GM12878 (cell line): ENCODE measurements at regions of chr7 and their contacts with region 1.

Region 1: DNA sequence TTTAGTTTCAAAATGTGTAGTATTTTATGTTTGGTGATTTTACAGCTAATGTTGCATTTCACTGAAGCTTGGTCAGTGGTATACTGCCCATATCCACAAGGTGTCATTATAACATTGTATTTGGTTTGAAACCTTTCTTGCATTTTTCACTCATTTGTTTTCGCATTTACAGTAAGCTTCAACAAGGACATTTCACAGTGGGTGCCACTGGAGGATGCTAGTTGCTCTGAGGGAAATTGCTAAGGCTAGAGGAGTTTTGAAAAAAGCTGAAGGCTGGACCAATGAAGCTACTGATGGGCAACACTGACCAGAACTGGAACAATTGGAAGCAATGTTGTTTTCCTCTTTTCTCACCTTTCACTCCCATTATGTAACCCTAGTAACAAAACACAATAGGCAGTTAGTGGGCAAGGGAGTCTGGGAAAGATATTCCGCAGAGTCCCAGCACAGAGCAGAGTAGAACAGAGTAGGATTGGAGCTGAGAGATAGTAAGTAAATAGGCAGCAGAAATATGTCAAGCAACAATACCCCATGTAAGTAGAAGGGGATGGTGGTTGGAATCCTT is 23.6 kb upstream of the SRI start:
- DNase-seq: peak; percentile 7
- ATAC-seq: peak; percentile 86
- H3K4me3 ChIP-seq: no peak overlapping the region
- H3K27ac ChIP-seq: no peak overlapping the region
- H3K4me1 ChIP-seq: no peaks in the 10 kb centered on the region
- H3K27me3 ChIP-seq: no peaks in the 10 kb centered on the region
- CTCF ChIP-seq: peak; percentile 57 to 83 (median 65)
- EP300 ChIP-seq: no peak
- POLR2A ChIP-seq: no peak
- RAD21 ChIP-seq: peak; percentile 86

Region 2: DNA sequence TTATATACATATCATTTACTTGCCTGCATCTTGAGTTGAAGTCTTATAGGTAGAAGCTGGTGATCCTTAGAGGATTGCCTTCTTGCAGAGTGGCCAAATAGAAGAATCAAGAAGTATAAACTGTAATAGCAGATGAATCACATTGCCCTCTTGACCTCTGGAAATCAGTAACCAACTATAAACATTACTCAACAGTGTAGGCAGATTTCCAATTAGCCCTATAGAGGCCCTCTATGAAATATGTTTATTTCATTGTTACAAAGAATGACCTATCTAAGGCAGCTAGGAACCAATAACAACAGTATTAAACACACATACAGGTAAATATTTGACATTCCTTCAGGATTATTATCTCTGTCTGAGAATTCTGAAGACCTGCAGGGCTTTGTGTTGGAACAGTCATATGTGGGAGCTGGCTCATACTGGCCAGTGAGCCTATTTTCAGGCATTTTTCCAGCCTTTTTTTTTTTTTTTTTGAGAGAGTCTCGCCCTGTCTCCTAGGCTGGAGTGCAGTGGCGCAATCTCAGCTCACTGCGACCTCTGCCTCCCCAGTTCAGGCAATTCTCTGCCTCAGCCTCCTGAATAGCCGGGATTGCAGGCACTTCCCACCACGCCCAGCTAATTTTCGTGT is 16.4 kb before region 1 on chr7:
- CTCF ChIA-PET with region 1: interaction called, 8 read pairs
- POLR2A ChIA-PET with region 1: no interaction called
- RAD21 ChIA-PET with region 1: interaction called, 10 read pairs
- SMC1A ChIA-PET with region 1: interaction called, 3 read pairs
- in situ Hi-C with region 1: no loop called
- intact Hi-C with region 1: no loop called
- DNase-seq: no peak
- ATAC-seq: peak; percentile 53
- H3K4me3 ChIP-seq: no peak overlapping the region
- H3K27ac ChIP-seq: no peak overlapping the region
- H3K4me1 ChIP-seq: no peaks in the 10 kb centered on the region
- H3K27me3 ChIP-seq: no peaks in the 10 kb centered on the region
- CTCF ChIP-seq: no peak
- EP300 ChIP-seq: no peak
- POLR2A ChIP-seq: no peak
- RAD21 ChIP-seq: no peak

Region 3: GRCh38 chr7:88344956-88345832 is 101.8 kb after region 1 on chr7:
- CTCF ChIA-PET with region 1: interaction called, 12 read pairs
- POLR2A ChIA-PET with region 1: no interaction called
- RAD21 ChIA-PET with region 1: interaction called, 29 read pairs
- SMC1A ChIA-PET with region 1: interaction called, 5 read pairs
- in situ Hi-C with region 1: no loop called
- intact Hi-C with region 1: no loop called
- DNase-seq: no peak
- ATAC-seq: peak; percentile 64
- H3K4me3 ChIP-seq: no peak overlapping the region
- H3K27ac ChIP-seq: no peak overlapping the region
- H3K4me1 ChIP-seq: no peaks in the 10 kb centered on the region
- H3K27me3 ChIP-seq: no peaks in the 10 kb centered on the region
- CTCF ChIP-seq: peak; percentile 27 to 55 (median 32); a peak in 5 of 6 replicates
- EP300 ChIP-seq: no peak
- POLR2A ChIP-seq: no peak
- RAD21 ChIP-seq: peak; percentile 67

Region 4: GRCh38 chr7:88363869-88364268 is 120.4 kb after region 1 on chr7:
- CTCF ChIA-PET with region 1: interaction called, 129 read pairs
- POLR2A ChIA-PET with region 1: no interaction called
- RAD21 ChIA-PET with region 1: interaction called, 81 read pairs
- SMC1A ChIA-PET with region 1: interaction called, 89 read pairs
- in situ Hi-C with region 1: no loop called
- intact Hi-C with region 1: no loop called
- DNase-seq: no peak
- ATAC-seq: peak; percentile 32; the same call in 2 of the 3 replicates
- H3K4me3 ChIP-seq: no peak overlapping the region
- H3K27ac ChIP-seq: no peak overlapping the region
- H3K4me1 ChIP-seq: no peaks in the 10 kb centered on the region
- H3K27me3 ChIP-seq: no peaks in the 10 kb centered on the region
- CTCF ChIP-seq: no peak
- EP300 ChIP-seq: no peak
- POLR2A ChIP-seq: no peak
- RAD21 ChIP-seq: no peak

Region 5: GRCh38 chr7:88546808-88547207 is 303.4 kb after region 1 on chr7:
- CTCF ChIA-PET with region 1: interaction called, 8 read pairs
- POLR2A ChIA-PET with region 1: no interaction called
- RAD21 ChIA-PET with region 1: interaction called, 8 read pairs
- SMC1A ChIA-PET with region 1: interaction called, 7 read pairs
- in situ Hi-C with region 1: no loop called
- intact Hi-C with region 1: loop called (anchors 5 kb)
- DNase-seq: peak; percentile 20
- ATAC-seq: peak; percentile 94
- H3K4me3 ChIP-seq: no peak overlapping the region
- H3K27ac ChIP-seq: no peak overlapping the region
- H3K4me1 ChIP-seq: no peaks in the 10 kb centered on the region
- H3K27me3 ChIP-seq: no peaks in the 10 kb centered on the region
- CTCF ChIP-seq: peak; percentile 65 to 71 (median 66); a peak in 5 of 6 replicates
- EP300 ChIP-seq: no peak
- POLR2A ChIP-seq: no peak
- RAD21 ChIP-seq: peak; percentile 90

Region 6: GRCh38 chr7:89622838-89623672 is 1379.6 kb after region 1 on chr7:
- CTCF ChIA-PET with region 1: interaction called, 16 read pairs
- POLR2A ChIA-PET with region 1: no interaction called
- RAD21 ChIA-PET with region 1: interaction called, 4 read pairs
- SMC1A ChIA-PET with region 1: interaction called, 7 read pairs
- in situ Hi-C with region 1: loop called (anchors 10 kb)
- intact Hi-C with region 1: loop called (anchors 5 kb)
- DNase-seq: peak; percentile 3
- ATAC-seq: peak; percentile 93
- H3K4me3 ChIP-seq: no peak overlapping the region
- H3K27ac ChIP-seq: no peak overlapping the region
- H3K4me1 ChIP-seq: no peaks in the 10 kb centered on the region
- H3K27me3 ChIP-seq: no peaks in the 10 kb centered on the region
- CTCF ChIP-seq: peak; percentile 69 to 80 (median 79)
- EP300 ChIP-seq: no peak
- POLR2A ChIP-seq: no peak
- RAD21 ChIP-seq: peak; percentile 79